ENCODE measurements at regions of chr21 and their contacts with region 1.

Region 1: DNA sequence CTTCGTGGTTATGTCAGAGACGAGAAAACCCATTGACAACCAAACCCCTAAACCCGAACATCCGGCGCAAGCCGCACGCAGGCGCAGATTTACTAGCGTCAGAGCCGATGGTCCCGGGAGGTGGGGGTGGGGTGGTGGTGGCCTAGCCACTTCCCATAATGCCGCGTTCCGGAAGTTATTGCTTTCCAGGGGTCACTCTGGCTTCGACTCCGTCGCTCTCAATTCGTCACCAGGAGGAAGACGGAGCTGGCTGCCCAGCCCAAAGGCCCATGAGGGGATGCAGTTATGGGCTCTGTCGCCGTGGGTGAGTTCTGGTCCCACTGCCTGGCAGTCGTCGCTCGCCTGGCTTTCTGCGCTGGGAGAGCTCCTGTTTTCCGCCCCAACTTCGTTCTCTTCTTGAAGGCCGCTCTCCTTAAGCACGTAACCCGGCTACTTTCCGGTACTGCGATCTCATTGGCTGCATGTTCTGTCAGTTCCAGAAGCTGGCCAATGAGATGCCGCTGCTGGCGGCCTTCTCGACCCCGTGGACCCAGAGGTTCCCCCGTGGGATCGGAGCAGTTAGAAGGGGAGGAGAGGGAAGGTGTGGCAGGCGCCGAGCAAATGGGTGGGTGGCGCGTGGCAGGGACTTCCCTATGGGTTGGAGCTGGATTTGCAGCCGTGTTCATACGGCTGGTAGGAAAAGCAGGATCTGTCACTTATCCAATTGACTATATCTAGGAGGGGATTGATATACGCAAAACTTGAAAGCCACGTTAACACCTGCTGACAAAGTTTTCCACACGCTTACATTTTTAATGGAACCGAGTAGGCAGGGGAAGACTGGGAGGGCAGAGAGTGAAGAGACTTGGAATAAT is at the start of gene USP16:
- H3K4me3 Mint-ChIP-seq: peak within 1 kb of the TSS; percentile 86
- H3K27ac Mint-ChIP-seq: peak within 1 kb of the TSS; percentile 98
- H3K4me1 Mint-ChIP-seq: peaks cover 20% of the 10 kb centered on the region
- H3K27me3 Mint-ChIP-seq: no peaks in the 10 kb centered on the region

Region 2: DNA sequence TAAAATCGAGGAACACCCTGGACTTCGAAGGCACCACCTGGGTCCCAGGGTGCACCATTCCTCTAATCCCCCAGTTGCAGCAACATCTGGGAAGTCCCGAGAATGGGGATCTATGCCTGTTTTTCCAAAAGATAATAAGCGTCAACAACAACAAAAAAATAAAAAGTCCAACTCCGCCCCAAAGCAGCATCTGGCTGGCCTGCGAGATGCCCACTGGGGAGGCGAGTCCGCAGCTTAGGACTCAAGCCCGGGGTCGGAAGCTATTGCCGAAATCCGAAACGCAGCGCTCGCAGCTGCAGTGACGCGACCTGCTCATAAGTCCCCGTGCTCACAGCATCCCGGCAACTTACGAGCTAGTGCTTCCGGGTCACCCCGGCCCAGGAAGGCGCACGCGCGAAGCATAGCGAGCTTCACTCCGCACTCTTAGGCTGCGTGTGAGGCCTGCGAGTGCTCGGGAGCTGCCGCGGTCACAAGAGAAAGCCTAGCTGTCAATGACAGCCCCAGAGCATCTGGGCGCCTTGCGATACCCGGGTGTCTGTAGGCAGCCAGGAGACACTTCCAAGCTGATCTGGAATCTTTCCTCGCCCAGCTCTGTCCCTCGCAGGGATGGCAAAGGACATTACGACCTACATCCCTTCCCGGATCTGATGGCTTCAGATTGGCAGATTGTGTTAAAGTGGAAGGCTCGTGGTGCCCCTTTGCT is 22.1 kb before region 1 on chr21:
- intact Hi-C with region 1: loop called (anchors 1 kb)
- H3K4me3 Mint-ChIP-seq: peak overlapping the region; percentile 72
- H3K27ac Mint-ChIP-seq: peak overlapping the region; percentile 93
- H3K4me1 Mint-ChIP-seq: peaks cover 6% of the 10 kb centered on the region
- H3K27me3 Mint-ChIP-seq: no peaks in the 10 kb centered on the region

Region 3: DNA sequence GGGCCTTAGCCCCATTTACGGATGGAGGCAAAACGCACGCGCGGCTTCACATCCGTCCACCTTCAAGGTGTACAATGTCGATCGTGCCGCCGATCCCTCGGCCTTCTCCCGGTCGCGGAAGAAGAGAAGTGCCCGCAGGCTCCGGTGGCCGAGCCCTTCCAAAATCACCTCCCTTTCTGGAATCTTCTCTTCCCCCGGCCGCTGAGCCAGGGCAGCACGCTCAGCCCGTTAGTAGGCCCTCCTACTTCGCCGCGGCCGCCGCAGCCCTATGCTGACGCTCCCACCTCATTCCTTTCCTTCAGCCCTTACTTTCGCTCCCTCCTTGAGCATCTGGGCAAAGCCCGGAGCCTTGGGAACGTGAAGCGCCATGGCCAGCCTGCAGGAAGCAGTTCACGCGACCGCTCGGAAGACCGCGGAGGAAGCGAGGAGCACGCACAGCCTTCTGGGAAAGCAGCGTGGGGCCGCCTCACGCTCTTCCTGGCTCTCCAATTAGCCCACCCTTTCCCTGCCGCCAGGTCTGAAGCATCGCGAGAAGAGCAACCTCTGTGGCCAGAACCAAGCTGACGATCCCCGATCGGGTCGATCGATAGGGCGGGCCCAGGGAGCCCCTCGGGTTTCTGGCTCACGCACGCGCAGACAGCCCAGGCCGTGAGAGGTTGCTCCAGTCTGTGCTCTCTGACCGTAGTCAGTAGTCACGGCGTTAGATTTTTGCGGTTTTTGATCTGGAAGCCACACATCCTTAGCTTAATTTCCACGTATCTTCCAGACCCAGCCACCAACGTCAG is 48.7 kb after region 1 on chr21 and contains the start of gene CCT8:
- intact Hi-C with region 1: loop called (anchors 5 kb)
- H3K4me3 Mint-ChIP-seq: peak within 1 kb of the TSS; percentile 97
- H3K27ac Mint-ChIP-seq: peak within 1 kb of the TSS; percentile 95
- H3K4me1 Mint-ChIP-seq: peaks cover 34% of the 10 kb centered on the region
- H3K27me3 Mint-ChIP-seq: no peaks in the 10 kb centered on the region

Region 4: DNA sequence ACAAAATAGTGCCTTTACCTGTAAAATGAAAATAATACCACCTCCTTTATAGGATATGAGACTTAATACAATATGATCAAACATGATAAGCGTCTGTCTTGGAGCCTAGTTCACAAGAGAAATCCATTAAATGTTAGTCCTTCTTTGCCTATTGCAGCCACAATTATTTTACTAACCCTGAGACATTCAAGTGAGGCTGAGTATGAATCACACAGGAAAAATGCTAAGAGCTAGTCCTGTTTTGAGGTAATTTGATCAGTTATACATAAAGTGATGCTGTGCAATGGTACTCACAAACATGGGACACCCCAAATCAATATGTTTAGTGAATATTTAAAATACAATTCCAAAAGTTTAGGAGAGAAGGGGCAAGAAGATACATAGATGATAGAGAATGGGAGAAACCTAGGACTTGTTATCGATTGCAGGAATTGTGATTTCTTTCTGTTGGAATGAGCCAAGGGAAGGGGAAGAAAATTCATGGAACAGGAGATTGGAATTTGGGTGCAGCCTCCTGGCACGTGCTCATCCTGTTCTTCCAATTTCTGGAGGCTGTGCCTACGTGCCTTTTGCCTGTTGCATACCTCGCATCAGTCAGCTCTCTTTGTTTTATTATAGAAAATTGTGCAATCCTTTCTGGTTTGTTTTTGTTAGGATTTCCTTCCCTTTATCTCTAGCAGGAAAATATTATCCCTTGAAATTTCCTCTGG is 234.1 kb after region 1 on chr21:
- intact Hi-C with region 1: no loop called
- H3K4me3 Mint-ChIP-seq: no peak overlapping the region
- H3K27ac Mint-ChIP-seq: no peak overlapping the region
- H3K4me1 Mint-ChIP-seq: peaks cover 25% of the 10 kb centered on the region
- H3K27me3 Mint-ChIP-seq: peaks cover 2% of the 10 kb centered on the region